CD8-positive, alpha-beta T cell (primary cell): ENCODE measurements at regions of chr7 and their contacts with region 1.

Region 1: DNA sequence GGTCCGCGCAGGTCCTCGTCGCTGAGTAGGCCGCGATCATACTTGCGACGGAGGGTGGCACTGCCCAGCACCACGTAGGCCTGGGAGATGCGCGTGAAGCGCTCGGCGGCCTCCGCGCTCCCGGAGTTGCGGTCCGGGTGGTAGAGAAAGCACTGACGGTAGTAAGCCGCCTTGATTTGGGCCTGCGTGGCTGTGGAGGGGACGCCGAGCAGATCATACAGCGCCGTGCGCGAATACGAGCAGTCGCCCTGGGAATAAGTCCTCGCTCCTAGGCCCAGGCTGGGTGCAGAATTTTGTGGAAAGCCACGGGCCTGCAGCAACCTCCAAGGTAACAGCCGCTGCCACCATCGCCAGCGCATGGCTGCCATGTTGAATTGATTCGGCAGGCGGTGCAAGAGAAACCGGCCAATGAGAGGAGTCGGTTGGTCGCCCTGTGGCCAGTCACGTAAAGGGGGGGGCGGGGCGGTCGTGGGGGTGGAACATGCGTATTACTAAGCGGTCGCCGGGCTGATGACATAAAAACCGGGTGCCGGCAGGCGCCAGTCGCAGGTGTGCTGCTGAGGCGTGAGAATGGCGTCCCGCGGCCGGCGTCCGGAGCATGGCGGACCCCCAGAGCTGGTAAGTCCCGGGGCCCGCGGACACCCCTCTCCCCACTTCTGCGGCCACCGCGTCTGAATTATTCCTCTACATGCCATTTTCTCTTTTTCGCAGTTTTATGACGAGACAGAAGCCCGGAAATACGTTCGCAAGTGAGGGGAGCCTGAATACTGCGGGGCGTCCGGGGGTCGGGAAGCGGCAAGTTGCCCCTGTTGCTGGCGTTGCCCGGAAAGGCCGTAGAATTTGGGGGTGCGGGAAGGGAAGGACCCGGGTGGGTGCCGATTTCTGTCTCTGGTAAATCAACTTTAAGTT is at the starts of genes BUD23 and DNAJC30:
- DNase-seq: peak; percentile 95 to 97 (median 97)
- ATAC-seq: peak; percentile 98
- H3K4me3 ChIP-seq: peak within 1 kb of the TSS; percentile 80 to 96
- H3K4me3 Mint-ChIP-seq: peak within 1 kb of the TSS; percentile 93
- H3K27ac ChIP-seq: peak within 1 kb of the TSS; percentile 81 to 90
- H3K27ac Mint-ChIP-seq: peak within 1 kb of the TSS; percentile 97
- H3K4me1 ChIP-seq: peaks cover 29% of the 10 kb centered on the region
- H3K4me1 Mint-ChIP-seq: peaks cover 39% of the 10 kb centered on the region
- H3K27me3 ChIP-seq: no peaks in the 10 kb centered on the region
- H3K27me3 Mint-ChIP-seq: no peaks in the 10 kb centered on the region
- CTCF ChIP-seq: no peak
- total RNA-seq, gene BUD23: 123 to 129 TPM
- total RNA-seq, gene DNAJC30: 13.5 to 14.4 TPM

Region 2: GRCh38 chr7:73822319-73823076 is 139.2 kb after region 1 on chr7:
- CTCF ChIA-PET with region 1: no interaction called
- POLR2A ChIA-PET with region 1: no interaction called
- intact Hi-C with region 1: no loop called
- DNase-seq: no peak
- ATAC-seq: no peak
- H3K4me3 ChIP-seq: no peak overlapping the region
- H3K4me3 Mint-ChIP-seq: no peak overlapping the region
- H3K27ac ChIP-seq: no peak overlapping the region
- H3K27ac Mint-ChIP-seq: no peak overlapping the region
- H3K4me1 ChIP-seq: peaks cover 10% of the 10 kb centered on the region
- H3K4me1 Mint-ChIP-seq: peaks cover 10% of the 10 kb centered on the region
- H3K27me3 ChIP-seq: no peaks in the 10 kb centered on the region
- H3K27me3 Mint-ChIP-seq: peaks cover 8% of the 10 kb centered on the region
- CTCF ChIP-seq: no peak

Region 3: DNA sequence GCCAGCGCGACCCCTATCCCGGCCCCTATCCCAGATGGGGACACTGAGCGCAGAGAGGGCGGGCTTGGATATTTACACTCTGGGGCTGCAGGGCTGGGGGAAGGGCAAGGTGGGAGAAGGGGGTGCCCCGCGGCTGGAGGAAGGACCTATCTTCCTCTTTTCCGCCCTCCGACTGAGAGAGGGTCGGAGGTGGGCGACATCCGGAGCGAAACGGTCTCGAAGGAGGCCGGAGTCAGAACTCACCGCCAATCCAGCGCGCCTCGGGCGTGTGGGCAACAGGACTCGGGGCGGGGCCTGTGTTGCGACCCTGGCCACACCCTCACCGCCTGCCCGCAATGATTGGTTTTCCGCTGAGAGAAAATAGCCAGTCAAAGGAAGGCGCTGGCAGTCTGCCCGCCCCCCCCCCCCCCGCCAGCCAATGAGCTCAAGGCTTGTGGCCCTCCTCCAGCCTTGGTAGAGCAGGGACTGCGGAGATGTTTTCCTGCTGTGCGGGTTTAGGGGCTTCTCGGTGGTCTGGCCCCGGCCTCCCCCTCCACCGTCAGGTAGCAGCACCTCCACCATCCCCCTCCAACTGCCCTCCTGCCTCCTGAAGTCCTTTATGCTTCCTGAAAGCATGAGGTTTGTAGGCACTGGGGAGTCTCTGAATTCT is 159.1 kb after region 1 on chr7 and contains the start of gene METTL27:
- CTCF ChIA-PET with region 1: no interaction called
- POLR2A ChIA-PET with region 1: no interaction called
- intact Hi-C with region 1: loop called in 1 of 2 experiments (anchors 5 kb)
- DNase-seq: peak; percentile 76 to 94 (median 90)
- ATAC-seq: peak; percentile 98
- H3K4me3 ChIP-seq: peak within 1 kb of the TSS; percentile 58 to 77
- H3K4me3 Mint-ChIP-seq: peak within 1 kb of the TSS; percentile 85
- H3K27ac ChIP-seq: no peak within 1 kb of the TSS
- H3K27ac Mint-ChIP-seq: peak within 1 kb of the TSS; percentile 69
- H3K4me1 ChIP-seq: peaks cover 5% of the 10 kb centered on the region
- H3K4me1 Mint-ChIP-seq: peaks cover 13% of the 10 kb centered on the region
- H3K27me3 ChIP-seq: no peaks in the 10 kb centered on the region
- H3K27me3 Mint-ChIP-seq: no peaks in the 10 kb centered on the region
- CTCF ChIP-seq: no peak
- total RNA-seq, gene METTL27: not detected